ENCODE measurements at regions of chr17 and their contacts with region 1.

Region 1: GRCh38 chr17:39863918-39864746 is at the start of gene IKZF3:
- DNase-seq: no peak
- ATAC-seq: peak; percentile 57
- H3K4me3 ChIP-seq: peak within 1 kb of the TSS; percentile 78
- H3K27ac ChIP-seq: peak within 1 kb of the TSS; percentile 100
- H3K4me1 ChIP-seq: peaks cover 35% of the 10 kb centered on the region
- H3K27me3 ChIP-seq: no peaks in the 10 kb centered on the region
- CTCF ChIP-seq: peak; percentile 53 to 85 (median 59); a peak in 5 of 6 replicates
- EP300 ChIP-seq: peak; percentile 20 to 34; a peak in 1 of 4 replicates
- POLR2A ChIP-seq: peak; percentile 89
- RAD21 ChIP-seq: peak; percentile 77
- polyA plus RNA-seq, gene IKZF3: 5.5 to 14.0 TPM

Region 2: DNA sequence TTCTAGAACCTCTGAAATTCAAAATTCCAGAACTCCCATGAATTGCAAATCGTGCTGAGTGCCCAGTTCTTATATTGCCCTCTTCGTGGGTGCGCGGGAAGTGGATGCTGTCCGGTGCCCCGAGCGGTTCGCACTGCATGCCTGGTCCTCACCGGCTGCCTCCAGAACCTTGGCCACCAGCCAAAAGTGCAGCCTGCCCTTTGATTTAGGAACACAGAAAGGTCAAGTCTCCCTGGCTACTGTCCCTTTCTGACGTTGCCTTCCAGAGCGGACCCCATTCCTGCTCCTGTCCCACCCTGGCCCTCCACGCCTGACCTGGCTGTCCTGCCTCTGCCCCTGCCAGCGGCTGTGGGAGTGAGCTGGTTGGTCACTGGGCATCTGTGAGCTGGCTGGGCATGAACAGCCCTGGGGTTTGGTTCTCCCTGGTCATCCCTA is 266.1 kb before region 1 on chr17:
- CTCF ChIA-PET with region 1: no interaction called
- POLR2A ChIA-PET with region 1: no interaction called
- RAD21 ChIA-PET with region 1: no interaction called
- SMC1A ChIA-PET with region 1: no interaction called
- in situ Hi-C with region 1: no loop called
- intact Hi-C with region 1: no loop called
- DNase-seq: no peak
- ATAC-seq: no peak
- H3K4me3 ChIP-seq: no peak overlapping the region
- H3K27ac ChIP-seq: no peak overlapping the region
- H3K4me1 ChIP-seq: no peaks in the 10 kb centered on the region
- H3K27me3 ChIP-seq: peaks cover 39 to 41% of the 10 kb centered on the region in 2 experiments
- CTCF ChIP-seq: no peak
- EP300 ChIP-seq: no peak
- POLR2A ChIP-seq: no peak
- RAD21 ChIP-seq: no peak

Region 3: GRCh38 chr17:39730095-39730921 is 133.8 kb before region 1 on chr17 and contains the start of gene MIEN1:
- CTCF ChIA-PET with region 1: interaction called, 6 read pairs
- POLR2A ChIA-PET with region 1: interaction called, 9 read pairs
- RAD21 ChIA-PET with region 1: interaction called, 14 read pairs
- SMC1A ChIA-PET with region 1: interaction called, 10 read pairs
- in situ Hi-C with region 1: no loop called
- intact Hi-C with region 1: no loop called
- DNase-seq: peak; percentile 43
- ATAC-seq: peak; percentile 96
- H3K4me3 ChIP-seq: peak within 1 kb of the TSS; percentile 91
- H3K27ac ChIP-seq: peak within 1 kb of the TSS; percentile 88
- H3K4me1 ChIP-seq: peaks cover 3% of the 10 kb centered on the region; the same call in 1 of the 2 replicates
- H3K27me3 ChIP-seq: no peaks in the 10 kb centered on the region
- CTCF ChIP-seq: peak; percentile 71 to 90 (median 85)
- EP300 ChIP-seq: 0 out of 4 replicates have a peak, but pooled peaks of 1 of the 2 experiments have one; percentile 13
- POLR2A ChIP-seq: peak; percentile 98
- RAD21 ChIP-seq: peak; percentile 44
- polyA plus RNA-seq, gene MIEN1: 24.9 to 42.5 TPM

Region 4: DNA sequence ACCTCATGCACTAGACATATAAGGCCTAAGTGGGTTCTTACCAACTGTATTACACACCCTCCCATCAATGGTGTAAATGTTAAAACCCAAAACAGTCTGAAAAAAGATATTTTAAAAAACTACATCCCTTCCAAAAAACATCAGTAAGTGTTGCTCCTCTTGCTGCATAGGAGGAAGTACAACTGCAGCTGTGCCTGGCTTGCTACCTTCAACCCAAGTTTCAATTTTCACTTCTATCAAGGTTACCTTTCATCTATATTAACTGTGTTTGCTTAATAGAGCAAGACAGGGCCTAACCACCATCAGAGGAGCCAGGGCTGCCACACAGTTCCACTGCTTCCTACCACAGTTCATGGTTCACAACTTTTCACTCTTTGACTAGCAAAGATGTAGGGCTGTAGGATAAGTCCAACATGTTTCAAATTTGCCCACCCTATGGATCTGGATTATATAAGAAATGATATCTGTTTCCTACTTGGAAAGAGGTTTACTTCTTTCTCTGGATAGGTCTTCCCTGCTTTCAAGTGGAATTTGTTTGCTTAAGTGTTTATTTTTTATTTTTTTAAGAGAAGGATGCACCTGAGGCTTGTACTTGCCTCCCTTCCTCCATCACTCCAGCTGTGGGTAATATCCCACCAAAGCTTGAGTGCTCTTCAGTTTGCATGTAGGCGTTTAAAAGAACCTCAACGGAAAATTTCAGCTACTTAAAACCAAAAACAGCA is 69.7 kb before region 1 on chr17:
- CTCF ChIA-PET with region 1: interaction called, 17 read pairs
- POLR2A ChIA-PET with region 1: interaction called, 3 read pairs
- RAD21 ChIA-PET with region 1: interaction called, 16 read pairs
- SMC1A ChIA-PET with region 1: interaction called, 65 read pairs
- in situ Hi-C with region 1: no loop called
- intact Hi-C with region 1: loop called (anchors 2 kb)
- DNase-seq: peak; percentile 95
- ATAC-seq: peak; percentile 98
- H3K4me3 ChIP-seq: peak overlapping the region; percentile 50
- H3K27ac ChIP-seq: peak overlapping the region; percentile 93
- H3K4me1 ChIP-seq: peaks cover 63% of the 10 kb centered on the region
- H3K27me3 ChIP-seq: no peaks in the 10 kb centered on the region
- CTCF ChIP-seq: no peak
- EP300 ChIP-seq: peak; percentile 46 to 76; a peak in 3 of 4 replicates
- POLR2A ChIP-seq: peak; percentile 53; the same call in 1 of the 2 replicates
- RAD21 ChIP-seq: 0 out of 2 replicates have a peak, but pooled peaks have one; percentile 2

Region 5: DNA sequence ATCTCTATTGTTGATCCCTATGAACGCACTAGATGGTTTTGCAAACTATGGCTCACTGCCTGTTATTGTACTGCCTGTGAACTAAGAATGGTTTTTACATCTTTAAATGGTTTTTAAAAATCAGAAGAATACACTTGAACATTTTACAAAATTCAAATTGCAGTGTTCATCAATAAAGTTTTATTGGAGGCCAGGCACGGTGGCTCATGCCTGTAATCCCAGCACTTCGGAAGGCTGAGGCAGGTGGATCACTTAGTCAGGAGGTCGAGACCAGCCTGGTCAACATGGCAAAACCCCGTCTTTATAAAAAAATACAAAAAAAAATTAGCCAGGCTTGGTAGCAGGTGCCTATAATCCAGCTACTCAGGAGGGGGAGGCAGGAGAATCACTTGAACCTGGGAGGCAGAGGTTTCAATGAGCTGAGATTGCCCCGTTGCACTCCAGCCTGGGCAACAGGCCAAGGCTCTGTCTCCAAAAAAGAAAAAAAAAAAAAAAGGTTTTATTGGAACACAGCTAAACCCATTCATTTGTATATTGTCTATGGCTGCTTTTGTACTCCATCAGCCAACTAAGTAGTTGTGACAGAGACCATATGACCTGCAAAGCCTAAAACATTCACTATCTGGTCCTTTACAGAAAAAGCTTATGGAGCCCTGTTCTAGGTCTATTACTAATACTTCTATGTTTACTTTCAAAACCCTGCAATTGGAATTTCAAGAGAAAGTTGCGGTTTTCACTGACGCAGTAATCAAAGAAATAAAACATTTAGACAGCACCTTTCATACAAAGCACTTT is 18.9 kb before region 1 on chr17:
- CTCF ChIA-PET with region 1: interaction called, 5 read pairs
- POLR2A ChIA-PET with region 1: interaction called, 8 read pairs
- RAD21 ChIA-PET with region 1: interaction called, 40 read pairs
- SMC1A ChIA-PET with region 1: interaction called, 29 read pairs
- in situ Hi-C with region 1: no loop called
- intact Hi-C with region 1: no loop called
- DNase-seq: no peak
- ATAC-seq: peak; percentile 23; the same call in 2 of the 3 replicates
- H3K4me3 ChIP-seq: 0 out of 2 replicates have a peak overlapping the region, but pooled peaks have one; percentile 31
- H3K27ac ChIP-seq: peak overlapping the region; percentile 40
- H3K4me1 ChIP-seq: peaks cover 58% of the 10 kb centered on the region
- H3K27me3 ChIP-seq: no peaks in the 10 kb centered on the region
- CTCF ChIP-seq: no peak
- EP300 ChIP-seq: no peak
- POLR2A ChIP-seq: no peak
- RAD21 ChIP-seq: no peak

Region 6: DNA sequence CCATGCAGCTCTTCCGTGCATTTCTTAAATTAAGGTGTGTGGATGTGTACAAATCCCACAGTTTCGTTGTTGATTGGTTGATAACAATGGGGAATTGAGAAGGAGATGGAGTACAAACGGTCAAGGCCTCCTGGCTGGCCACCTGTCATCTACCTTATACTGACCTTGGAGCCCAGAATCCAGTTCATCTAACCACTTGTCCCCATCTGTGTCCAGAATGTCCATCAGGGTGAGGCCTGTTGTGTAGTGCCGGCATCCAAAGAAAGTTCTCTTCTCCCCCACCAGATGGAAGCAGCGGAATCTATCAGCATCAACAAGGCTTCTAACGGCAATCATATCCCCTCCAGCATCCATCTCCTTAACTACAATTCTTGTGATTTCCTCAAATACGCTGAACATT is 52.8 kb after region 1 on chr17:
- CTCF ChIA-PET with region 1: no interaction called
- POLR2A ChIA-PET with region 1: interaction called, 4 read pairs
- RAD21 ChIA-PET with region 1: interaction called, 8 read pairs
- SMC1A ChIA-PET with region 1: interaction called, 4 read pairs
- in situ Hi-C with region 1: no loop called
- intact Hi-C with region 1: loop called (anchors 1 kb)
- DNase-seq: no peak
- ATAC-seq: no peak
- H3K4me3 ChIP-seq: no peak overlapping the region
- H3K27ac ChIP-seq: no peak overlapping the region
- H3K4me1 ChIP-seq: peaks cover 33% of the 10 kb centered on the region
- H3K27me3 ChIP-seq: no peaks in the 10 kb centered on the region
- CTCF ChIP-seq: no peak
- EP300 ChIP-seq: no peak
- POLR2A ChIP-seq: no peak
- RAD21 ChIP-seq: no peak

Region 7: DNA sequence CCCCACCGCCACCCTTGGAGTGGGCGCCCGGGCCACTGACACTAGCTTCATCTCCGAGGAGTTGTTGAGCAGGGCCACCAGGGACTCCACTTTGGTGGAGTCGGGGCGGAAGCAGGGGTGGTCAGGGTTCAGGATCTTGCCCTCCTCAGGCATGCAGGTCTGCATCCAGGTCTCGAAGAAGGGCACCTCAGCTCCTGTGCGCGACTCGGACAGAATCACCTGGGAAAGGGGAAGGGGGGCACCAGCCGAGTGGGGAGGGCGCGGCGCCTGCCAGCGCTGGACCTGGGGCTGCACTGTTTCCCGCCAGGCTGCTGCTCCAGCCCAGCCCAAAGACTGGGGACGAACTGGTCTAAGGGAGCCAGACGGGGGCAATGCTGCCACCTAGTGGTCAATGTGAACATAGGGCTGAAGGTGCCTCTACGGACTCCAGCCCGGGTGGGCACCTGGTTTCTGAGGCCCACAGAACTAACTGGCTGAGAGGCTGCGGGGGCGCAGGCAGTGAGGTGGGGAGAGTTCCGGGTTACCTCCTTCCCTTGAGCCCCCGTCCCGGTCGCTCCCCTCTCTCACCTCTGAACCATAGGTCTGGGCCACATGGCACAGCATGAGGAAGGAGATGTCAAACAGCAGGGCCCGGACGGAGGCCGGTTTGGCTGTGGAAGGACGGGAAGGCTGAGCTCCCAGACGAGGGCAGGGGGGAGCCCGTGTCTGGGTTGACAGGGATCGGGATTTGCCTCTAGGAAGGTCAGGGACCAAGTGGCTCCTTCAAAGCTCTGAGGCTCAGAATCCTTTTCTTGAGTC is 162.9 kb after region 1 on chr17:
- CTCF ChIA-PET with region 1: no interaction called
- POLR2A ChIA-PET with region 1: no interaction called
- RAD21 ChIA-PET with region 1: no interaction called
- SMC1A ChIA-PET with region 1: no interaction called
- in situ Hi-C with region 1: no loop called
- intact Hi-C with region 1: no loop called
- DNase-seq: peak; percentile 12
- ATAC-seq: peak; percentile 100
- H3K4me3 ChIP-seq: no peak overlapping the region
- H3K27ac ChIP-seq: no peak overlapping the region
- H3K4me1 ChIP-seq: no peaks in the 10 kb centered on the region
- H3K27me3 ChIP-seq: no peaks in the 10 kb centered on the region
- CTCF ChIP-seq: peak; percentile 80 to 88 (median 86)
- EP300 ChIP-seq: no peak
- POLR2A ChIP-seq: no peak
- RAD21 ChIP-seq: peak; percentile 63

Region 8: DNA sequence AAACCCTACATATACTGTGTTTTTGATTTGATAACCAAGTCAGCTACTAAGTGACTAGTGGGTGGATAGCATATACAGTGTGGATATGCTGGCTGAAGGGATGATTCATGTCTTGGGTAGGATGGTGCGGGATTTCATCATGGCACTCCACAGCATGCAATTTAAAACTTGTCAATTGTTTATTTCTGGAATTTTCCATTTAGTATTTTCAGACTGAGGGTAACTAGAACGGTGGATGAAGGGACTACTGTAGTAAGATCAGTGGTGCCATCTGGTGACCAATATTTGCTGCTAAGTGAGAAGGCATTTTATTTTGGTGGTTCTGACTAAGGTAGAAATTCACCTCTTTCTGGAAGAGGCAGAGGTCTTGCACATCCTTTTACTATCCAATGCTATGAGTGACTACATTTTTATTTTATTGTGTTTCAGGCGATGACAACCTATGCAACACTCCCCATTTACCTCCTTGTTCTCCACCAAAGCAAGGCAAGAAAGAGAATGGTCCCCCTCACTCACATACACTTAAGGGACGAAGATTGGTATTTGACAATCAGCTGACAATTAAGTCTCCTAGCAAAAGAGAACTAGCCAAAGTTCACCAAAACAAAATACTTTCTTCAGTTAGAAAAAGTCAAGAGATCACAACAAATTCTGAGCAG is 426.6 kb after region 1 on chr17:
- CTCF ChIA-PET with region 1: no interaction called
- POLR2A ChIA-PET with region 1: no interaction called
- RAD21 ChIA-PET with region 1: no interaction called
- SMC1A ChIA-PET with region 1: no interaction called
- in situ Hi-C with region 1: no loop called
- intact Hi-C with region 1: no loop called
- DNase-seq: no peak
- ATAC-seq: peak; percentile 27
- H3K4me3 ChIP-seq: 0 out of 2 replicates have a peak overlapping the region, but pooled peaks have one; percentile 29
- H3K27ac ChIP-seq: no peak overlapping the region
- H3K4me1 ChIP-seq: peaks cover 9% of the 10 kb centered on the region
- H3K27me3 ChIP-seq: no peaks in the 10 kb centered on the region
- CTCF ChIP-seq: peak; percentile 53 to 72 (median 58); a peak in 5 of 6 replicates
- EP300 ChIP-seq: no peak
- POLR2A ChIP-seq: no peak
- RAD21 ChIP-seq: peak; percentile 69

Measured in GM12878 (cell line).